Right cardiac atrium (tissue), 5 donors: ENCODE measurements at regions of chr3 and their contacts with region 1.

Region 1: DNA sequence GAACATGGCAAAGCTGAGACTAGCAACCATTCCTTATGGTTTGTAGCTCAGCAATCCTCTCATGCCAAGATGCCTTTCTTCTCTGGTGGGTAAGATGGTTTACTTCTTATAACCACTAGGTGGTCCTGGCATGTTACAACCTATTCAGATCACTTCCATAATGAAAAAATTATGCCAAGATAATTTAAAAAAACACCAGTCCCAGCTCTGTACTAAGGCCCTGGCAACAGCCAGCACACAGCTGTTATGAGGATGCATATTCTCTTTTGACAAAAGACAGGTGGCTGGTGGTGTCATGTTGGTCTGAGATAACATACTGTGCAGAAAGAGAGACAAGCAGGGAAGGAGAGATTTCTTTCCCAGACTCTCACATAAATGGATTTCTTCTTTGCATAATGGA is 65.7 kb upstream of the FRMD4B start:
- DNase-seq: no peak
- ATAC-seq: no peak
- H3K4me3 ChIP-seq: no peak overlapping the region
- H3K27ac ChIP-seq: no peak overlapping the region
- H3K4me1 ChIP-seq: peaks cover 3% of the 10 kb centered on the region
- H3K27me3 ChIP-seq: no peaks in the 10 kb centered on the region

Region 2: DNA sequence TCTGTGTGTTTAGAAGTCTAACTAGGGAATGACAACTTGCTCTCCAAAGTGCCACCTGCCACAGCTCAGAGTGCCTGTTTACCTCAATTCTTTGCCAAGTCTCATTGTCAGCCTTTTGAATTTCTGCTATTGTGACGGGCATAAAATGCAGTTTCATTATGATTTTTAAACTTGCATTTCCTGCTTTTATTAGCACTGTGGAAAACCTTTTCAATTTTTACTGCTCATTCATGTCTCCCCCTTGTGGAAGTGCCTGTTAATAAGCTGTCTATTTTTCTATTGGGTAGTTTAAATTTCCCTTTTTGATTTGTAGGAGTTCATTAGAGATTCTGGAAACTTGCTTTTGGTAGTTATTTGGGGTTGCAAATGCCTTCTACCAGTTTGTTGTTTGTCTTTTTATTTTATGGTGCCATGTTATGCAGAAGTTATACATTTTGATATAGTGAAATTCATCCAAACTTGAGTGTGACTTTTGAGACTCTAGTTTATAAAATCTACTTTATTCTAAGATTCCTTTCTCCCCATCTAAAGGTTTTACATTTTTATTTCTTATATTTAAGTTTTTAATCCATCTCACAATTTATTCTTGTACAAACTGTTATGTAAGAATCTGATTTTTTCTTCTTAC is 11.8 kb before region 1 on chr3:
- intact Hi-C with region 1: no loop called
- DNase-seq: no peak
- ATAC-seq: peak in 1 of 2 donors; percentile 33
- H3K4me3 ChIP-seq: no peak overlapping the region
- H3K27ac ChIP-seq: no peak overlapping the region
- H3K4me1 ChIP-seq: no peaks in the 10 kb centered on the region
- H3K27me3 ChIP-seq: no peaks in the 10 kb centered on the region

Region 3: DNA sequence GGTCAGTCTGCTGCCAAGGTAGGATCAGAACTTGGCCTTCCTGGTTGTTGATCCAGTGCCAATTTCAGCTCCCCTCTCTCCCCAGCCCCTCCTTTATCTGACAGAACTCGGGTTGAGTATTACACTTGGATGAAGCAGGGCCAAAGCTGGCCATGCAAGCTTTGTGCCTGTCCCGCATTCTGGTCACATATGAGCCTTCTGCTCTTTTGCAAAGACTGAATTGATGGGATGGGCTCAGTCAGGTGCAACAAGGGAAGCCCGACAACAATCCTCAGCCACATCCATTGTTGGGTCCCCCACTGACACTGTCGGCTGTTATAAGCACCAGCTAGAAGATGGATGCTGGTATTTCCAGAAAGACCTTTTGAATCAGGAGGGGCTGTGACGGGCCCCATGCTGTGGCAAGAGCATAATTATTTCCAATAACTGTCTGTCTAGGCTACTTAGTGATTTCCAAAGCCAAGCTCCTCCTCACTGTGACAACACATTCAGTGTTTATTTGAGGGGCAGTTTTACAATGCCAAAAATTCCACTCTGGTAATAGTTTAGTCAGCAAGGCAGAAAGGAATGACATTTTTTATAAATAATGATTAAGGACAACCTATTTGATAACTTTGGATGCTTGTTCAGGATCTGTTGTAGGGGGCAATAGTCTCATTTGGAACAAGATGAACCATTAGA is 81.1 kb after region 1 on chr3:
- intact Hi-C with region 1: loop called in 1 of 4 experiments (anchors 10 kb)
- DNase-seq: no peak
- ATAC-seq: no peak
- H3K4me3 ChIP-seq: no peak overlapping the region
- H3K27ac ChIP-seq: peak overlapping the region; percentile 23
- H3K4me1 ChIP-seq: peaks cover 8% of the 10 kb centered on the region
- H3K27me3 ChIP-seq: no peaks in the 10 kb centered on the region